PC-3 (cell line): ENCODE measurements at regions of chr19 and their contacts with region 1.

Region 1: GRCh38 chr19:17035842-17036424 is 9.3 kb upstream of the CPAMD8 start:
- DNase-seq: no peak
- ATAC-seq: no peak
- H3K4me3 ChIP-seq: no peak overlapping the region
- H3K27ac ChIP-seq: no peak overlapping the region
- H3K4me1 ChIP-seq: no peaks in the 10 kb centered on the region
- H3K27me3 ChIP-seq: no peaks in the 10 kb centered on the region
- CTCF ChIP-seq: no peak

Region 2: GRCh38 chr19:16788311-16788865 is 247.5 kb before region 1 on chr19:
- CTCF ChIA-PET with region 1: no interaction called
- POLR2A ChIA-PET with region 1: no interaction called
- intact Hi-C with region 1: no loop called
- DNase-seq: no peak
- ATAC-seq: no peak
- H3K4me3 ChIP-seq: no peak overlapping the region
- H3K27ac ChIP-seq: no peak overlapping the region
- H3K4me1 ChIP-seq: no peaks in the 10 kb centered on the region
- H3K27me3 ChIP-seq: no peaks in the 10 kb centered on the region
- CTCF ChIP-seq: no peak

Region 3: GRCh38 chr19:16801596-16801995 is 234.3 kb before region 1 on chr19:
- CTCF ChIA-PET with region 1: no interaction called
- POLR2A ChIA-PET with region 1: interaction called, 31 read pairs
- intact Hi-C with region 1: no loop called
- DNase-seq: peak; percentile 61
- ATAC-seq: peak; percentile 56
- H3K4me3 ChIP-seq: no peak overlapping the region
- H3K27ac ChIP-seq: no peak overlapping the region
- H3K4me1 ChIP-seq: no peaks in the 10 kb centered on the region; the same call in 1 of the 2 replicates
- H3K27me3 ChIP-seq: no peaks in the 10 kb centered on the region
- CTCF ChIP-seq: peak; percentile 35; the same call in 1 of the 2 replicates